ENCODE measurements at regions of chr4 and their contacts with region 1.

Region 1: DNA sequence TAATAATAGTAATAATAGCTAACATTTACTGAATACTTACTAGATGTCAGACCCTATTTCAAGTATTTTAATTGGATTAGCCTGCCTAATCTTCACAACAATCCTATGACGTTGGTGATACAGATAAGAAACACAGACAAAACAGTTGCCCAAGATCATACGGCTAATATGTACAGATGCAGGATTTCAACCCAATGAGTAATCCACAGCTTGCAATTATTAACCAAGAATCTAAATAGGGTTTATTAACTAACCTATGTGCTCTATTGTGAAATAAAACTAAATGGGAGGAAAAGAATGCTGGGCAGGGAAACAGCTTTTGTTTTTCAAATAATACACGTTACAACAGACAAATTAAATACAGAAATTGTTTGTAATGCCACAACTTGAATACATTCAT is 23.4 kb downstream of the FBXO8 start:
- DNase-seq: peak; percentile 30
- H3K4me3 ChIP-seq: peak overlapping the region in 1 of 2 experiments; percentile 33; a peak in 2 of 4 replicates
- H3K27ac ChIP-seq: peak overlapping the region; percentile 30 to 98; a peak in 3 of 4 replicates
- H3K4me1 ChIP-seq: peaks cover 32 to 36% of the 10 kb centered on the region in 2 experiments
- H3K27me3 ChIP-seq: no peaks in the 10 kb centered on the region
- CTCF ChIP-seq: no peak
- EP300 ChIP-seq: peak in 1 of 2 experiments; percentile 94; a peak in 3 of 4 replicates
- RAD21 ChIP-seq: no peak

Region 2: DNA sequence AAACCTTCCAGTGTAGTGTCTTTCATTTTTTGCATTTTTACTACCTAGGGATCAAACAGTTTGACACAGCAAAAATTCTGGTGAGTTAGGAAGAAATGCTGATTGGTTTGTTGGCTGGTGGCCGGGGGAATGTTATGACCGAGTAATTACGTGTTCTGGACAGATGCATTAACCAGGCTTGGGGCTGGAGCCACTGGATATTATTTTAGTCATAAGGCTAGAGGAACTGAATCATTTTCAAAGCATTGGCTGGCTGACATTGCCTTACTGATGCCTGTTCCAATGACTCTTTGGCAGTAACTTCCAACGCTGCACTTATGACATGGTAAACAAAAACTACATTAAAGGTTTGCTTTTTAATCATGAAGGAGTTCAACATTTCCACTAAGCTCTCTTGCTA is 61.3 kb before region 1 on chr4:
- CTCF ChIA-PET with region 1: interaction called, 13 read pairs
- POLR2A ChIA-PET with region 1: interaction called, 4 read pairs
- DNase-seq: peak; percentile 51
- H3K4me3 ChIP-seq: peak overlapping the region; percentile 19 to 42; a peak in 2 of 4 replicates
- H3K27ac ChIP-seq: peak overlapping the region; percentile 83 to 99
- H3K4me1 ChIP-seq: peaks cover 18 to 42% of the 10 kb centered on the region in 2 experiments; a peak in 3 of 4 replicates
- H3K27me3 ChIP-seq: no peaks in the 10 kb centered on the region
- CTCF ChIP-seq: no peak
- EP300 ChIP-seq: peak; percentile 96 to 99
- RAD21 ChIP-seq: 0 out of 2 replicates have a peak, but pooled peaks have one; percentile 20

Region 3: GRCh38 chr4:174318829-174319764 is 59.0 kb after region 1 on chr4:
- CTCF ChIA-PET with region 1: interaction called, 11 read pairs
- POLR2A ChIA-PET with region 1: no interaction called
- DNase-seq: peak; percentile 34
- H3K4me3 ChIP-seq: no peak overlapping the region
- H3K27ac ChIP-seq: peak overlapping the region in 1 of 2 experiments; percentile 68; a peak in 2 of 4 replicates
- H3K4me1 ChIP-seq: peaks cover 10% of the 10 kb centered on the region in 2 experiments; a peak in 3 of 4 replicates
- H3K27me3 ChIP-seq: no peaks in the 10 kb centered on the region
- CTCF ChIP-seq: peak; percentile 93
- EP300 ChIP-seq: no peak
- RAD21 ChIP-seq: peak; percentile 84

Measured in SK-N-SH (cell line).